Heart right ventricle (tissue), 16 donors: ENCODE measurements at regions of chr11 and their contacts with region 1.

Region 1: DNA sequence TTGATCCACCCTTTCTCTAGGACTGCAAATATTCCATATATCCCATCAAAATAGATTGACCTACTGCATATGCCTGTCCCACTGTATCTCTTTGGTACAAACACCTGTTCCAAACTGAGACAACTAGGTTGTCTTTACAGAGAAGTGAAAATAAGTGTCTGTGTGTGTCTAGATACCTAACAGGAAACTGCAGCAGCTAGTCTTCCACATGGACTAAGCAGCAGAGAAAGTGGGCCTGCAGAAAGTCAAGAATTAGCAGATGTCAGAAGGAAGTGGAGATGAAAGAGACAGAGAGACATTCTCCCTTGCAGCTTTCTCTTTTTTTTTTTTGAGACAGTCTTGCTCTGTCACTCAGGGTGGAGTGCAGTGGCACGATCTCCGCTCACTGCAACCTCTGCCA is 3.9 kb upstream of the RAB39A start:
- DNase-seq: no peak
- ATAC-seq: no peak
- H3K4me3 ChIP-seq: no peak overlapping the region
- H3K27ac ChIP-seq: no peak overlapping the region
- H3K4me1 ChIP-seq: peaks cover 0 to 14% (median 9%) of the 10 kb centered on the region in 9 donors
- H3K27me3 ChIP-seq: peaks cover 0 to 42% (median 25%) of the 10 kb centered on the region in 7 donors
- CTCF ChIP-seq: no peak

Region 2: GRCh38 chr11:107908306-107908705 is 16.0 kb before region 1 on chr11:
- intact Hi-C with region 1: loop called in 1 of 10 experiments (anchors 2 kb)
- DNase-seq: no peak
- ATAC-seq: no peak
- H3K4me3 ChIP-seq: no peak overlapping the region
- H3K27ac ChIP-seq: no peak overlapping the region
- H3K4me1 ChIP-seq: no peaks in the 10 kb centered on the region
- H3K27me3 ChIP-seq: peaks cover 0 to 30% (median 9%) of the 10 kb centered on the region in 7 donors
- CTCF ChIP-seq: no peak